HEK293T (cell line): ENCODE measurements at regions of chr11 and their contacts with region 1.

Region 1: GRCh38 chr11:126268708-126269579 is at the starts of genes FOXRED1 and SRPRA:
- DNase-seq: peak; percentile 100

Region 2: DNA sequence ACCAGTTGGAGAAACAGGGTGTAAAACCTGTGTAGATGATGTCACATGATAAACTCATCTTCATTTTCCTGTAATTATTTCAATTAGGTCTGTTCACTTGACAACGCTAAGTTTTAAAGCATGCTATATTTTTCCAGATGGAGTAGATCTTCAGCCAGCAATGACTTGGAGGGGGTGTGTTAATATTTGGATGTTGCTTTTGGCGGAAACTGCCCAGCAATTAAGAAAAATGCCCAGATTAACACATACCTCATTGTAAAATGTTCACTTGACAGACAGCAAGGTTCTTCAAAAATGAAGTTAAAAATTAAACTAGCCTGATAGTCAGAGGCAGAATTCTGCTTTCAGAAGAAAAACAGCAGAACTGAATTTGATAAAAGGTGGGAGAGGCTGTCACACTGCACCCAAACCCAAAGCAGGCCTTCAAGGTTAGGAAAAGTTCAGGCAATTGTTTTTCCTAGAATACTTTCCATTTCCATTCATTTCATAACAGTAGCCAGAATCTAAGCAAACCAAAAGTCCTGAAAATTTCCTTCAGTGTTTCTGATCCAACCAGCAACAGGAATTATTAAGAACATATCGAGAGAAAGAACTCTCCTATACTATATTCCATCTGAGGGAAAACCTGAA is 290.1 kb before region 1 on chr11:
- CTCF ChIA-PET with region 1: no interaction called
- POLR2A ChIA-PET with region 1: no interaction called
- DNase-seq: no peak

Region 3: GRCh38 chr11:126282736-126283591 is 14.0 kb after region 1 on chr11 and contains the start of gene TIRAP:
- CTCF ChIA-PET with region 1: no interaction called
- POLR2A ChIA-PET with region 1: interaction called, 27 read pairs
- DNase-seq: peak; percentile 67

Region 4: GRCh38 chr11:126332131-126332711 is 63.3 kb after region 1 on chr11:
- CTCF ChIA-PET with region 1: no interaction called
- POLR2A ChIA-PET with region 1: no interaction called
- DNase-seq: no peak